ENCODE measurements at regions of chr1 and their contacts with region 1.

Region 1: DNA sequence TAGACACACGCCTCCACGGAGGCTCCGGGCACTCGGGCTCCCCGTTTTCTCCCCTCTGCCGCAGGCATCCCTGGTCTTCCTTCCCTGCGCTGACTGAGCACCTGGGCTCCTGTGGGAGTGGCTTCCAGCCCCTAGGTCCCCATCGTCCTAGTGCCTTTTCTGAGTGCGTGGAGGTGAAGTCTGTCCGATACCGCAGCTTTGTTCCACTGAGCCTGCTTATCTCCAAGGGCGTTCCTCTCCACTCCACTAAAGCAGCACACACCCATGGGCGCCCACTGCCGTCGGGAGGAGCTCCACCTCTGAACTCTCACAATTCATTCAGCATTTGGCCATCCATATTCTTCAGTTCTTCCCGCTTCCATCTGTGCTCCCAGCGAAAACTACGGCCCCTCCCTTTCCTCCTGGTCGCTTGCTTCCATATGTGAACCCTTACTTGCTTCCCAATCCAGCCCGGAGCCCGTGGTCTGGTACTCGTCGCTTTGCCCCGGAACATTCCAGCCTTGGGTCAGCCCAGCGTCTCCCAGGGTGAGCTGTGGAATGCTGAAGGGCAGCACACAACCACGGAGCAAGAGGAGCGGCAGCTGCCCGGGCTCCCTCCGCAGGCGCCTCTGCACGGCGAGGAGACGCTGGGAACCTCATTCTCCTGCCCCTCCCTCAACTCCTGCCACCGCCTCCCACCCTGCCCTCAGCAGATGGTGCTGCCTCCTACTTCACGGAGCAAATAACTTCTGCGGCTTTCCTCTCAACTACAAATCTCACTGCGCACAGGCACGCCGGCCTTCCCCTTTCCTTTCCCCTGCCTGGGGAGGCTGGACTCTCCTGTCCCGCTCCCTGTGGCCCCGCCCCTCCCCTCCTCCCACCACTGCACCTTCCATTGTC is 27.5 kb downstream of the ATP8B2 start:
- DNase-seq: peak; percentile 77 to 91 (median 87)
- H3K4me3 ChIP-seq: peak overlapping the region; percentile 19 to 89 (median 70)
- H3K27ac ChIP-seq: peak overlapping the region in 1 of 2 experiments; percentile 29
- H3K4me1 ChIP-seq: peaks cover 0 to 32% (median 26%) of the 10 kb centered on the region in 4 experiments
- H3K27me3 ChIP-seq: no peaks in the 10 kb centered on the region

Region 2: DNA sequence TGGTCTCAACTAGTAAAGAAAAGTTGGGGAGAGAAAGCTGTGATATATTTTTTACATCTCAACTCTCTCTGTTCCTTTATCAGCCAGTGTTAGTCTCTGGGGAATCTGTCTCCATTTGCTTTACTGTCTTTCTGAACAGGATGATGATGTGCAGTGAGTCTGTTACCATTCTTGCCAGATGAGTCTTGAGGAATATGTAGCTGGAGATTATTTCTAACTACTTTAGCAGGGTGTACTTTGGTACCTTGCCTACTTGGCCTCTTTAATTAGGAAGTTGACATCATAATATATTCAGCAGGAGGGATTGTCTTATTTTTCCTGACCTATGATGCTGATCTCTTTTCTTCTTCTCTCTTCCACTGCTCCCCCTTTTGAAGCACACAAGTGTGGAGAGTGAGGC is 96.1 kb before region 1 on chr1:
- CTCF ChIA-PET with region 1: no interaction called
- POLR2A ChIA-PET with region 1: no interaction called
- DNase-seq: no peak
- H3K4me3 ChIP-seq: no peak overlapping the region
- H3K27ac ChIP-seq: no peak overlapping the region
- H3K4me1 ChIP-seq: no peaks in the 10 kb centered on the region
- H3K27me3 ChIP-seq: no peaks in the 10 kb centered on the region

Region 3: DNA sequence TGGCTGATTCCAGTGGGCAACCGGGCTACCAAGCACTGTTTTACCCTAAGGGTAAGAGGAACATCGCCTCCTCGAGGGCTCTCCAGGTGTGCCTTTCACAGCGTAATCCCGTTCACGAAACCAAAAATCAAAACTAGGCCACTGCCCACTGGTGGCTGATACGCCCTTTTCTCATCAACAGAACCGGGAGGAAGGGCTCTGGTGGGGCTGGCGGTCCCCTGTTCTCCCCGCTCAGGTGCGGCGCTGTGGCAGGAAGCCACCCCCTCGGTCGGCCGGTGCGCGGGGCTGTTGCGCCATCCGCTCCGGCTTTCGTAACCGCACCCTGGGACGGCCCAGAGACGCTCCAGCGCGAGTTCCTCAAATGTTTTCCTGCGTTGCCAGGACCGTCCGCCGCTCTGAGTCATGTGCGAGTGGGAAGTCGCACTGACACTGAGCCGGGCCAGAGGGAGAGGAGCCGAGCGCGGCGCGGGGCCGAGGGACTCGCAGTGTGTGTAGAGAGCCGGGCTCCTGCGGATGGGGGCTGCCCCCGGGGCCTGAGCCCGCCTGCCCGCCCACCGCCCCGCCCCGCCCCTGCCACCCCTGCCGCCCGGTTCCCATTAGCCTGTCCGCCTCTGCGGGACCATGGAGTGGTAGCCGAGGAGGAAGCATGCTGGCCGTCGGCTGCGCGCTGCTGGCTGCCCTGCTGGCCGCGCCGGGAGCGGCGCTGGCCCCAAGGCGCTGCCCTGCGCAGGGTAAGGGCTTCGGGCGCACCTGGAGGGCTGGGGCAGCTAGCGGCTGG is 52.4 kb after region 1 on chr1 and contains the start of gene IL6R:
- CTCF ChIA-PET with region 1: interaction called, 11 read pairs
- POLR2A ChIA-PET with region 1: no interaction called
- DNase-seq: peak; percentile 96 to 97 (median 96)
- H3K4me3 ChIP-seq: peak within 1 kb of the TSS; percentile 27 to 89 (median 71)
- H3K27ac ChIP-seq: peak within 1 kb of the TSS; percentile 42 to 80
- H3K4me1 ChIP-seq: peaks cover 20 to 90% (median 85%) of the 10 kb centered on the region in 4 experiments
- H3K27me3 ChIP-seq: no peaks in the 10 kb centered on the region

Measured in common myeloid progenitor, CD34-positive (primary cell).